ENCODE measurements at regions of chr2 and their contacts with region 1.

Region 1: DNA sequence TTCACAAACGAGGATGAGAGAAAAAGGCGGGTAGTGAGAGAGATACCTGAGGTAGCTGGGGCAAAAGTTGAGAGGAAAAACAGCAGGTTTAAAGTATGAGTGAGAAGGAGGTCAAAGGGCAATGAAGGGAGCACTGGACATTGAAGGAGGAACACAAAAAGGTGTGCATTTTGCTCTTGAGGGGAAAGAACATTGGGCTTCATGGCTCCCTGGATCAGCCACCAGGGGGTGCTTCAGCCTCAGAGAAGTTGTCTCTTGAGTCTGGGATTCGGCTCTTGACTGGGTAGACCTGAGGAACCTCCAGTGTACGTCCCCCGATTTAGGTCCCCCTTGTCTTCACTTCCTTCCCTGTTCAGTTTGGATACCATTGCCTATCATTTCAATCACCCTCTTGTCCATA is 128.5 kb downstream of the RAPGEF4 start:
- DNase-seq: peak; percentile 36
- CTCF ChIP-seq: peak; percentile 75

Region 2: DNA sequence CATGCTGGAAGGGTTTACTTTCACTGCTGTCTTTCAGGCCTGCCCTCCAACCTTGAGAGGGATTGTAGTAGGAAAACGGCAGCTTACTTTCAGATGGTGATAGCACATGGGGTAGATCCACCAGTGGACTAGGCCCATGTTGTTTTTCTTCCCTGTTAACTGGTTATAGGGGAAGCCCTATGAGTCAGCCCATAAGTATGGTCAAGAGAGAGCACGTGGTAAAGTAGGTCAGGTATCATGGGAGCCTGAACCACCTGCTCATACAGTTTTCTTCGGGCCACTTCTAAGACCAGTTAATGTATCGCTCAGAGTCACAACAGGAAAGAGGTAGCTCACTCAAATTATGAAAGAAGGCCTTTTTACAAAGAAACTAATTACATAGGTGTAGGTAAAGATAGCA is 275.3 kb before region 1 on chr2:
- in situ Hi-C with region 1: no loop called
- DNase-seq: no peak
- CTCF ChIP-seq: no peak

Region 3: DNA sequence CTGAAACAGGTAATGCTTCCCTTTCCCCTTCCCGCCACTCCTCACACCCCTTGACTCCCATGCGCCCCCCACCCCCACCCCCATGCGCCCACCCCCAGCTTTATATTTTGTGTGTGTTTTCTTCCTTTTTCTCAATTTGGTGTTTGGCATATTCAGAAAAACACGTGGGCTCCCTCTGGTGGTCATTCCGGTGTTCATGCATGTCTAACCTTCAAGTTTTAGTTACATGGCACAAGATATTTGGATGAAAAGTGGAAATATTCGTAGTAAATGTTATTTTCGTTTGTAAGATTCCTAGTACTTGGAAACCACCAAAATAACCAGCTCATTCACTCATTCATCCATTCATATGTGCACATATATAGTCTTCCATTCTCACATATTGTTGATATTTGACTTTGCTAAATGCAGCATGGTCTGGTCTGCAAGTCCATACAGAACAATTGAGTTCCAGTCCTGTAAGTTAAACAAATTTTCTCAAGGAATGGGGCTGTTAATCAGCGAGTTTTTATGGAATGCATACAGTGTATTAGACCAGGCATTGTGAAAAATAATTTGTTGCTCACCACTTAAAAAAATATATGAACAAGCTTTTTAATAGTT is 67.8 kb after region 1 on chr2:
- in situ Hi-C with region 1: loop called (anchors 10 kb)
- DNase-seq: peak; percentile 28
- CTCF ChIP-seq: peak; percentile 78